Activated T-helper 1 cell treated with anti-CD3 and anti-CD28 coated beads, Interleukin-12 subunit alpha, Interleukin-12 subunit beta, Interleukin-2, Interleukin-4 antibody, amounts not matched to agents 30 ng/mL and 10 ng/mL and 1 ng/mL, durations not matched to agents 14 hours and 24 hours and 36 hours (primary cell): ENCODE measurements at regions of chr6 and their contacts with region 1.

Region 1: DNA sequence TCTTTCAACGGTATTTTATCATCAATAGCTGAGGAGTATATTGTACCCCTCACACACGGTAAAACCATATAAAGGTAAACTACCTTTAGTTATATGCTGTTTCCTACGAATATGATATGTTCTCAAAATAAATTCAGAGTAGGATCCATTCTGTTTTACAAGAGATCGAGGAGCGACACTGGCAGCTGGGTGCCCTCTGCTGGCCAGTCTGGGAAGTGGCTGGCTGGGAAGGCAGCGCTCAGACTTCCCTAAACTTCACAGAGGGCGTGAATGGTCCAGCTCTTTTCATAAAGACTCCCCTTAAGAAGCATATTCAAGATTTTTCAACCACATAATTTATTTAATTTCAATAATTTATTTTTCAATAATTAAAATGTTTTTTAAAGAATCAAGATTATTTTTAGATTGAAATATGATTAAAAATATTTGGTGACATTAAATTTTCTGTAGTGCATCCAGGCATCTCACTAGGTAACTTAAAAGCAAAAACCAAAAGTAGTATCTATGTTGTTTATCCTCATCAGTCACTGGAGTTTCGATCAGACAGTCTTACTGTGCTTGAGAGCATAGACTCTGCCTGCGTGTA is 187.5 kb upstream of the PDE10A start:
- DNase-seq: peak; percentile 28
- H3K4me3 Mint-ChIP-seq: no peak overlapping the region
- H3K27ac Mint-ChIP-seq: no peak overlapping the region
- H3K4me1 Mint-ChIP-seq: peaks cover 12% of the 10 kb centered on the region
- H3K27me3 Mint-ChIP-seq: peaks cover 45% of the 10 kb centered on the region

Region 2: GRCh38 chr6:165662749-165663282 is 187.7 kb before region 1 on chr6 and contains the start of gene PDE10A:
- intact Hi-C with region 1: loop called (anchors 5 kb)
- DNase-seq: no peak
- H3K4me3 Mint-ChIP-seq: no peak within 1 kb of the TSS
- H3K27ac Mint-ChIP-seq: peak within 1 kb of the TSS; percentile 55
- H3K4me1 Mint-ChIP-seq: no peaks in the 10 kb centered on the region
- H3K27me3 Mint-ChIP-seq: peaks cover 52% of the 10 kb centered on the region
- total RNA-seq, gene PDE10A: not detected in 2 replicates

Region 3: GRCh38 chr6:165729307-165729936 is 121.1 kb before region 1 on chr6:
- intact Hi-C with region 1: loop called (anchors 1 kb)
- DNase-seq: no peak
- H3K4me3 Mint-ChIP-seq: no peak overlapping the region
- H3K27ac Mint-ChIP-seq: no peak overlapping the region
- H3K4me1 Mint-ChIP-seq: no peaks in the 10 kb centered on the region
- H3K27me3 Mint-ChIP-seq: no peaks in the 10 kb centered on the region

Region 4: GRCh38 chr6:165807249-165807960 is 43.1 kb before region 1 on chr6:
- intact Hi-C with region 1: no loop called
- DNase-seq: no peak
- H3K4me3 Mint-ChIP-seq: no peak overlapping the region
- H3K27ac Mint-ChIP-seq: no peak overlapping the region
- H3K4me1 Mint-ChIP-seq: no peaks in the 10 kb centered on the region
- H3K27me3 Mint-ChIP-seq: peaks cover 20% of the 10 kb centered on the region

Region 5: GRCh38 chr6:166365221-166365620 is 514.7 kb after region 1 on chr6:
- intact Hi-C with region 1: no loop called
- DNase-seq: no peak
- H3K4me3 Mint-ChIP-seq: no peak overlapping the region
- H3K27ac Mint-ChIP-seq: no peak overlapping the region
- H3K4me1 Mint-ChIP-seq: peaks cover 5% of the 10 kb centered on the region
- H3K27me3 Mint-ChIP-seq: no peaks in the 10 kb centered on the region